HCT116 (cell line): ENCODE measurements at regions of chr22 and their contacts with region 1.

Region 1: GRCh38 chr22:36194971-36195370 is 6.6 kb downstream of the APOL4 start:
- DNase-seq: peak; percentile 22
- ATAC-seq: peak; percentile 92
- H3K4me3 ChIP-seq: no peak overlapping the region
- H3K27ac ChIP-seq: no peak overlapping the region
- H3K4me1 ChIP-seq: no peaks in the 10 kb centered on the region
- H3K27me3 ChIP-seq: no peaks in the 10 kb centered on the region
- CTCF ChIP-seq: peak; percentile 63 to 78 (median 73)
- POLR2A ChIP-seq: no peak
- RAD21 ChIP-seq: peak; percentile 80

Region 2: GRCh38 chr22:36208177-36208755 is 13.3 kb after region 1 on chr22:
- CTCF ChIA-PET with region 1: no interaction called
- POLR2A ChIA-PET with region 1: no interaction called
- RAD21 ChIA-PET with region 1: no interaction called
- intact Hi-C with region 1: no loop called
- DNase-seq: no peak
- ATAC-seq: no peak
- H3K4me3 ChIP-seq: no peak overlapping the region
- H3K27ac ChIP-seq: no peak overlapping the region
- H3K4me1 ChIP-seq: no peaks in the 10 kb centered on the region
- H3K27me3 ChIP-seq: peaks cover 7% of the 10 kb centered on the region; the same call in 1 of the 2 replicates
- CTCF ChIP-seq: no peak
- POLR2A ChIP-seq: no peak
- RAD21 ChIP-seq: no peak

Region 3: DNA sequence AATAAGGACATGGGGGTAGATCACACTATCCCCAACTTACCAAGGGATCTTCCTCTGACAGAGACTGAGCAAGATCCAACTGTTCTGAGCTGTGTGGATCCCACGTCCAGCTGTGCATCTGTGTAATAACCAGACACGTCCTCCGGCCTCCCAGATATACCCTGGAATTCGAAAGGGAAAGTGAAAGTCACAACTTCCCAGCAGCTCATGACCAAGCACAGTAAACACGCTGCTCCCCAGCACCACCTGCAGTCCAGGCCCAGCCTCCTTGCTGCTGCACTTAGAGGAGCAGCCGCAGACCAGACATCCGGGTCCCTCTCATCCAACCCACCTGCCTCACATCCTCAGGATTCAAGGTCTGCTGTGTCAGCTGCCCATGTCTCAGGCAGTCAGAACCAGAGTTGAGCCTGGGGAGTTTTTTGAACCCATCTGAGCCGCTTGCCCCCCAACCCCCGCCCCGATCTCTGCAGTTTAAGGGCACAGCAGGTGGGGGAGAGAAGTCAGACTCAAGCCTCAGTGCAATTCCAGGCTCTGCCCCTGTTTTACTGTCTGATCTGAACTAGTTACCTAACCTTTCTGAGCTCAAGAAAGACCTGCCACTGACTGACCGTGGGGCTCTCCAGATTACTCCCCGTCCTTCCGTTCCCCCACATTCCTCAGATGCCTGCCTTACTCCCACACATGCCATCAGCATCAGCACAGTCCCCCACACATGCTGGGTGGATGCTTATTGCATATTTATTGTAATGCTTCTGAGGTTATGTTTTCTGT is 44.6 kb after region 1 on chr22 and contains the start of gene APOL2:
- CTCF ChIA-PET with region 1: no interaction called
- POLR2A ChIA-PET with region 1: no interaction called
- RAD21 ChIA-PET with region 1: no interaction called
- intact Hi-C with region 1: loop called (anchors 5 kb)
- DNase-seq: peak; percentile 83
- ATAC-seq: peak; percentile 96
- H3K4me3 ChIP-seq: peak within 1 kb of the TSS; percentile 69 to 84
- H3K27ac ChIP-seq: peak within 1 kb of the TSS; percentile 90
- H3K4me1 ChIP-seq: peaks cover 15 to 22% of the 10 kb centered on the region in 2 experiments; a peak in 3 of 4 replicates
- H3K27me3 ChIP-seq: no peaks in the 10 kb centered on the region
- CTCF ChIP-seq: peak in 2 of 3 experiments; percentile 63 to 71; a peak in 4 of 6 replicates
- POLR2A ChIP-seq: peak; percentile 73
- RAD21 ChIP-seq: peak; percentile 37
- total RNA-seq, gene APOL2: 9.9 TPM

Region 4: GRCh38 chr22:36277482-36278291 is 82.7 kb after region 1 on chr22:
- CTCF ChIA-PET with region 1: interaction called, 8 read pairs
- POLR2A ChIA-PET with region 1: no interaction called
- RAD21 ChIA-PET with region 1: no interaction called
- intact Hi-C with region 1: loop called (anchors 5 kb)
- DNase-seq: peak; percentile 40
- ATAC-seq: peak; percentile 93
- H3K4me3 ChIP-seq: no peak overlapping the region
- H3K27ac ChIP-seq: no peak overlapping the region
- H3K4me1 ChIP-seq: peaks cover 0 to 8% of the 10 kb centered on the region in 2 experiments; a peak in 2 of 4 replicates
- H3K27me3 ChIP-seq: no peaks in the 10 kb centered on the region; the same call in 1 of the 2 replicates
- CTCF ChIP-seq: peak; percentile 47 to 81 (median 69); a peak in 5 of 6 replicates
- POLR2A ChIP-seq: no peak
- RAD21 ChIP-seq: peak; percentile 48

Region 5: GRCh38 chr22:36286471-36287224 is 91.7 kb after region 1 on chr22:
- CTCF ChIA-PET with region 1: interaction called, 15 read pairs
- POLR2A ChIA-PET with region 1: no interaction called
- RAD21 ChIA-PET with region 1: no interaction called
- intact Hi-C with region 1: loop called (anchors 1 kb)
- DNase-seq: peak; percentile 18
- ATAC-seq: peak; percentile 94
- H3K4me3 ChIP-seq: no peak overlapping the region
- H3K27ac ChIP-seq: no peak overlapping the region
- H3K4me1 ChIP-seq: no peaks in the 10 kb centered on the region
- H3K27me3 ChIP-seq: no peaks in the 10 kb centered on the region
- CTCF ChIP-seq: peak; percentile 58 to 96 (median 95)
- POLR2A ChIP-seq: no peak
- RAD21 ChIP-seq: peak; percentile 60

Region 6: DNA sequence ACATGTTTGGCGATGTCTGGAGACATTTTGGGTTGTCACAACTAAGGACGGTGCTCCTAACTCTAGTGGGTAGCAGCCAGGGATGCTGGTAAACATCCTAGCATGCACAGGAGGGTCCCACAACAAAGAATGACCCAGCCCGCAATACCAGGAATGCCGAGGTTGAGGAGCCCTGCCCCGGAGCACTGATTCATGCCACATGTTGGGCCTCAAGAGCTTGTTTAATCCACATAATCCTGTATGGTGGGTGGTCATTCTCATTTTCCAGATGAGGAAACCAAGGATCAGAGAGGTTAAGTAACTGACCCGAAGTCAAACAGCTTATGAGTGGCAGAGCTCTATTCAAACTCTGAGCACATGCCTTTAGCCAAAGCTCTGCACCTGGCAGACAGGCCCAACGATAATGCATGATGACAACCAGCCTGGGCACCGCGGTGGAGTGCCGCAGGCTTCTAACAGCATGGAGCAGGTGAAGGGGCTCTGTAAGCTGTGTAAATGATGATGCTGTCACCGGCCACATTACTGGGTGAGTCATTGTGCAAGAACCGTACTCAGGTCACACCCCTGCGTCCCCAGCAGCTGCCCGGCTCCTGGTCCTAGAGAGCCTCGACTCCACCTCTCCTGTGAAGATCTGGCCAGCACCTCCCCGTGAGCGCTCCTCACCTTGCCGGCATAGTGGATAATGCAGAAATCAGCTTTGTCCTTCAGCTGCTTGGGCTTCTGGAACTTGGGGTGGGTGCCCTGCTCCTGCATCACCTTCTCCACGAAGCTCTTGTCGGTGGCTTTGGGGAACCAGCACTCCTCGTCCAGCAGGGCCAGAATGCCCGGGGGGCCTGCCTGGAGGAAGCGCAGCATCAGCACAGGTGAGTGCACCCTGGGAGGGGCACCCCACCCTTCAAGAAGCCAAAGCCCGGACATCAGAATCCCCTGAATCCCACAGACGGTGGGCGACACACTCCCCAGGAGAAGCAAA is 116.7 kb after region 1 on chr22:
- CTCF ChIA-PET with region 1: no interaction called
- POLR2A ChIA-PET with region 1: no interaction called
- RAD21 ChIA-PET with region 1: no interaction called
- intact Hi-C with region 1: no loop called
- DNase-seq: no peak
- ATAC-seq: no peak
- H3K4me3 ChIP-seq: no peak overlapping the region
- H3K27ac ChIP-seq: no peak overlapping the region
- H3K4me1 ChIP-seq: no peaks in the 10 kb centered on the region
- H3K27me3 ChIP-seq: no peaks in the 10 kb centered on the region
- CTCF ChIP-seq: no peak
- POLR2A ChIP-seq: no peak
- RAD21 ChIP-seq: no peak